Esophagus muscularis mucosa (tissue), 4 donors: ENCODE measurements at regions of chr16 and their contacts with region 1.

Region 1: GRCh38 chr16:48623304-48624016 is 13.5 kb upstream of the N4BP1 start:
- DNase-seq: peak; percentile 93
- H3K4me3 ChIP-seq: peak overlapping the region; percentile 48 to 62 (median 50)
- H3K27ac ChIP-seq: peak overlapping the region; percentile 59 to 80 (median 62)
- H3K4me1 ChIP-seq: peaks cover 21 to 44% (median 30%) of the 10 kb centered on the region in 4 donors
- H3K27me3 ChIP-seq: no peaks in the 10 kb centered on the region
- CTCF ChIP-seq: peak in 2 of 3 experiments; percentile 96 to 97
- EP300 ChIP-seq: no peak
- POLR2A ChIP-seq: no peak

Region 2: DNA sequence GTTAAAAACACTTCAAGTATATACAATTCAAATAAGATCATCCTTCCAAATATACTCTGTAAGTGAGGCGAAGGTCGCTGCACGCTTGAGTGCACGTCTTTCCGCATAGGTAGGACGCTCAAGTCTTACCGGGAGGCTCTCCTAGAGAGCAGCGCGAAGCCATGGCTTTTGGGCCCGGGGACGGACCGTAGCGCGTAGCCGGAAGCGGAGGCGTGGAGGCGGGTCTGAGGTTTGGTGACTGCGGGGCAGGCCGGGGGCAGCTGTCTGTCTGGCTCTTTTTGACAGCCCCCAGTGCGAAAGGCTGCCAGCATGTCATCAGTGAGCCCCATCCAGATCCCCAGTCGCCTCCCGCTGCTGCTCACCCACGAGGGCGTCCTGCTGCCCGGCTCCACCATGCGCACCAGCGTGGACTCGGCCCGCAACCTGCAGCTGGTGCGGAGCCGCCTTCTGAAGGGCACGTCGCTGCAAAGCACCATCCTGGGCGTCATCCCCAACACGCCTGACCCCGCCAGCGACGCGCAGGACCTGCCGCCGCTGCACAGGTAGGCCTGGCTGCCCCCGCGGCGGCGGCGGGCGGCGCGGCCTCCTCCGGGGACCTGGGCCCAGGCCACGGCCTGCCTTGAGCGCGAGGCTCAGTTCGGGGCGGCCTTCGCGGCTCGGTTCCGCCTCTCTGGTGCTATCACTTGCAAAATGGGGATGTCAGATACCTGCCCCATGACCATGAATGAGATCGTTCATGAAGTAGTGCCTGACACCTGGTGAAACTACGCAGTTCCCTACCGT is 379.2 kb before region 1 on chr16 and contains the start of gene LONP2:
- intact Hi-C with region 1: loop called (anchors 10 kb)
- DNase-seq: peak; percentile 97
- H3K4me3 ChIP-seq: peak within 1 kb of the TSS; percentile 77 to 92 (median 86)
- H3K27ac ChIP-seq: peak within 1 kb of the TSS; percentile 85 to 94 (median 90)
- H3K4me1 ChIP-seq: peaks cover 32 to 45% (median 38%) of the 10 kb centered on the region in 4 donors
- H3K27me3 ChIP-seq: no peaks in the 10 kb centered on the region
- CTCF ChIP-seq: no peak
- EP300 ChIP-seq: no peak
- POLR2A ChIP-seq: peak; percentile 42
- total RNA-seq, gene LONP2: 51.4 to 73.4 (median 63.3) TPM

Region 3: GRCh38 chr16:48353565-48354163 is 269.8 kb before region 1 on chr16:
- intact Hi-C with region 1: loop called (anchors 5 kb)
- DNase-seq: no peak
- H3K4me3 ChIP-seq: no peak overlapping the region
- H3K27ac ChIP-seq: no peak overlapping the region
- H3K4me1 ChIP-seq: peaks cover 0 to 22% (median 6%) of the 10 kb centered on the region in 4 donors
- H3K27me3 ChIP-seq: no peaks in the 10 kb centered on the region
- CTCF ChIP-seq: peak; percentile 78 to 84 (median 79)
- EP300 ChIP-seq: no peak
- POLR2A ChIP-seq: no peak

Region 4: DNA sequence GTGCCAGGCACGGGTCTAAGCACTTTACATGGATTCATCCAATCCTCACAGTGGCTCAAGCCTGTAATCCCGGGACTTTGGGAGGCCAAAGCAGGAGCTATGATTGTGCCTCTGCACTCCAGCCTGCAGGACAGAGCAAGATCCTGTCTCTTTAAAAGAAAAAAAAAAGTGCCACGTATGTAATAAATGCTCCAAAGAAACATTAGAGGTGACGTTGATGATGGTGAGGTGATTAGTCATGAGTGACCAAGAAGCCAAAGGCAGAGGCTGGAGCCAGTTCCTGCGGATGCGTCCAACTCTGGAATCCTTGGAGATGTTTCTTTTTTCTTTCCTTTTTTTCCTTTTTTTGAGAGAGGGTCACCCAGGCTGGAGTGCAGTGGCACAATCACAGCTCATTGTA is 178.9 kb before region 1 on chr16:
- intact Hi-C with region 1: no loop called
- DNase-seq: no peak
- H3K4me3 ChIP-seq: no peak overlapping the region
- H3K27ac ChIP-seq: peak overlapping the region; percentile 40 to 67 (median 53)
- H3K4me1 ChIP-seq: peaks cover 10 to 16% (median 13%) of the 10 kb centered on the region in 4 donors
- H3K27me3 ChIP-seq: no peaks in the 10 kb centered on the region
- CTCF ChIP-seq: no peak
- EP300 ChIP-seq: no peak
- POLR2A ChIP-seq: no peak

Region 5: DNA sequence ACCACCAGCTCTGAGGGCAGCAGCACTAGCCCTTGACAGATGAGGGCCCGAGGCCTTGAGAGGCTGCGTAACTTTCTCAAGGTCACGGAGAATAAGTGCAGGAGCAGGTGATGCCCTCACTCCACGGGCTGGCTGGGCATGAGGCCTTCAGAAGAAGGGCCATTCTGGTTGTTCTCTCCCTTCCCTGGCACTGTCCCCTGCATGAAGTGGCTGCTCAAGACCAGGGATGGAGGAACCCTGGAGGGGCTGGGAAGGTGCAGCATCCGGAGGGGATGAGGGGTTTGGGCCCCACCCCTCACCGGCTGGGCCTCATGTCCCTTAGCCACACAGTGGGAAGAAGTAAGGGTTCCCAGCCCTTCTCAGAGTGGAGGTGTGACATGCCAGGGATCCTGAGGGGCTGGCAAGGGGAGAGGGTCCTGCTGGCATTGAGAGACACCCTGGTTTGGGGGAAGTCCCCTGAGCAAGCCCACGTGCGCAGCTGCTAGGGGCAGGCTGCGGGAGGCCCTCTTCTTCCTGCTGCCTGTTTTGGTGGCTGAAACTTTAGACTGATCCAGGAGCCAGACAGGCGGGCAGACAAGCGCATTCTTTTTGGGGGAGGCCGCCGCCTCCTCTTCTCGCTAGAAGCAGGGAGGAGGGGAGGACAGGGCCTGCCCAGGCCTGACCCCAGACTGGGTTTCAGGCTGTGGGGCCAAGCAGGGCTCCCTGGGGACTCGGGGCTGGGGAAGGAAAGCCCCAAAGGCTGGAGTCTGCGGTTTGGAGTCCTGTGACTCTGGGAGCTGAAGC is 87.4 kb before region 1 on chr16:
- intact Hi-C with region 1: loop called (anchors 5 kb)
- DNase-seq: no peak
- H3K4me3 ChIP-seq: no peak overlapping the region
- H3K27ac ChIP-seq: peak overlapping the region; percentile 57 to 79 (median 64)
- H3K4me1 ChIP-seq: peaks cover 38 to 55% (median 52%) of the 10 kb centered on the region in 4 donors
- H3K27me3 ChIP-seq: no peaks in the 10 kb centered on the region
- CTCF ChIP-seq: no peak
- EP300 ChIP-seq: no peak
- POLR2A ChIP-seq: no peak

Region 6: DNA sequence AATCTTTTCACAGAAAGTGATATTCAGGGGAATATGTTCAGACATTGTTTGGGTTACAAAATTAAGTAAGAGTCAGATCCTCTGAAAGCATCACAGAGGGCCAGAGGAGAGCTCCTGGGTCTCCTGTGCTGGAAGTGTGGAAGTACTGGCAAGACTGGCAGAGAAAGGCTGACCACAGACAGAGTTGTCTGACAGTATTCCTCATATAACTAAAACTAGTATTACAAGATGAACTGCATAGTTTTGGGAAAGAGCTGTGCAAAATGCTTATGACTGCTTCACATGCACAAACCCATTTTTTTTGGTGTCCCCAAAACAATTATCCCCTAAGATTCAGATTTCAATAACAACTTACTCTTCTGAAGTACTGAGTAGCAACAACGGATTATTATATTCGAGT is 48.7 kb before region 1 on chr16:
- intact Hi-C with region 1: no loop called
- DNase-seq: no peak
- H3K4me3 ChIP-seq: no peak overlapping the region
- H3K27ac ChIP-seq: no peak overlapping the region
- H3K4me1 ChIP-seq: peaks cover 34 to 52% (median 49%) of the 10 kb centered on the region in 4 donors
- H3K27me3 ChIP-seq: no peaks in the 10 kb centered on the region
- CTCF ChIP-seq: no peak
- EP300 ChIP-seq: no peak
- POLR2A ChIP-seq: no peak